Gastrocnemius medialis (tissue), 4 donors: ENCODE measurements at regions of chr12 and their contacts with region 1.

Region 1: GRCh38 chr12:3533703-3534386 is 42.8 kb downstream of the PRMT8 start:
- DNase-seq: peak; percentile 45 to 54
- ATAC-seq: peak; percentile 71 to 74
- H3K4me3 ChIP-seq: no peak overlapping the region
- H3K27ac ChIP-seq: peak overlapping the region; percentile 23 to 52 (median 41)
- H3K4me1 ChIP-seq: peaks cover 43 to 46% of the 10 kb centered on the region in 2 donors
- H3K27me3 ChIP-seq: no peaks in the 10 kb centered on the region
- CTCF ChIP-seq: peak in 2 of 5 experiments; percentile 24 to 29
- POLR2A ChIP-seq: no peak

Region 2: GRCh38 chr12:3299929-3300832 is 233.7 kb before region 1 on chr12:
- in situ Hi-C with region 1: no loop called
- intact Hi-C with region 1: loop called (anchors 1 kb)
- DNase-seq: peak; percentile 90 to 92
- ATAC-seq: peak; percentile 93 to 96
- H3K4me3 ChIP-seq: peak overlapping the region in 3 of 4 donors; percentile 15 to 43 (median 28)
- H3K27ac ChIP-seq: peak overlapping the region; percentile 64 to 76 (median 74)
- H3K4me1 ChIP-seq: peaks cover 14% of the 10 kb centered on the region in 2 donors
- H3K27me3 ChIP-seq: no peaks in the 10 kb centered on the region
- CTCF ChIP-seq: peak; percentile 82 to 91 (median 84)
- POLR2A ChIP-seq: no peak

Region 3: DNA sequence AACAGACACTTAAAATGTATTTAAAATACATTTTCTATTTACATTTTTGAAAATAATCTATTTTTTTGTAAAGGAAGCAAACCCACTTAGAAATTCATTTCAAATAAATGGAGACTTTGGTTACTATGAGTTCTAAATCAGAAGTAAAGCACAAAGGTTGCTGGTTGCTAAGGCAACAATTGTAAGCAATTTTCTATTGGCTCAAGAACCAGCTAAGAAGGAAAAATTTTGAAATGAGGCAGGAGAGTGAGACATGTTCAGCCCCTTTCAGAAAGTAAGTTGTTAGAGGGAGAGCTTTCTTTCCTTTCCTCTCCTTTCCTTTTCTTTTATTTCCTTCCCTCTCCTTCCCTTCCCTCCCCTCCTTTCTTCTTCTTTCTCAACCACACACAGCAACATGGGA is 37.9 kb after region 1 on chr12:
- in situ Hi-C with region 1: no loop called
- intact Hi-C with region 1: no loop called
- DNase-seq: no peak
- ATAC-seq: no peak
- H3K4me3 ChIP-seq: no peak overlapping the region
- H3K27ac ChIP-seq: no peak overlapping the region
- H3K4me1 ChIP-seq: no peaks in the 10 kb centered on the region
- H3K27me3 ChIP-seq: no peaks in the 10 kb centered on the region
- CTCF ChIP-seq: no peak
- POLR2A ChIP-seq: no peak

Region 4: DNA sequence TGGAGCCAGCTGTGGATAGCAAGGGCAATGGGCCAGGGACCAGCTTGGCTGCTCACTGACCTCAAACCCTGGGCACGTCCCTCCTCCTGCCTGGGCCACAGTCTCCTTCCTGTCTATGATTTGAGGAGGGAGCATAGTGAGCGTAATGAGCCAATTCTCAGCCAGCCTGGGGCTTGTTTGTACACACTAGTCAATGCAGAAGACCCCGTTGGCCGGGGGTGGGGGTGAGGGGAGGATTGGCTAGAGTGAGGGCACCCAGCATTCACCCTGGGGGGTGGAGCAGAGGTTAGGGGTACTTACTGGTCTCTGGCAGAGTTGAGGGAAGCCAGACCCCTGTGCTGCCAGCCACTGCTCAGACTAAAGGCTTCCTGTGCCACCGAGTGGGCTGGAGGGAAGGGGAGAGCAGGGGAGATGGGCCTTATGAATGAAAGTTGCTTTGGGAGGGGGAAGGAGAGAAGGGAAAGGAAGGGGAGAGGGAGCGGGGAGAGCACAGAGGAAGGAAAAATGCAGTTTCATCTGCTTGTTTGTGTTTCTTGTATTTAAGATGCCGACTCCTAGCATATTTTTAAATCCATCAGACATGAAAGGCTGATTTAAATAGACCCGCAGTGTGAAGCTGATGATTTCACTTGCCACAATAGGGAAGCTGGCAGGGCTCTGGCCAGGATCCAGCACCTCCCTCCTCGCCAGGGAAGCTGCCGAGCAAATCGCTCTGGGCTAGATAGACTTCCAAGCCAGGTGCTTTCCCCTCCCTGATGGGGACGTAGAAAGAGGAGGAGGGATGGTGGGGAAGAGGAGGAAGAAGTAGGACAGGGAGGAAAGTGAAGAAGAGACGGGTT is 71.1 kb after region 1 on chr12:
- in situ Hi-C with region 1: no loop called
- intact Hi-C with region 1: loop called (anchors 5 kb)
- DNase-seq: peak in 1 of 2 donors; percentile 22
- ATAC-seq: no peak
- H3K4me3 ChIP-seq: no peak overlapping the region
- H3K27ac ChIP-seq: no peak overlapping the region
- H3K4me1 ChIP-seq: peaks cover 23% of the 10 kb centered on the region in 2 donors
- H3K27me3 ChIP-seq: no peaks in the 10 kb centered on the region
- CTCF ChIP-seq: no peak
- POLR2A ChIP-seq: no peak

Region 5: DNA sequence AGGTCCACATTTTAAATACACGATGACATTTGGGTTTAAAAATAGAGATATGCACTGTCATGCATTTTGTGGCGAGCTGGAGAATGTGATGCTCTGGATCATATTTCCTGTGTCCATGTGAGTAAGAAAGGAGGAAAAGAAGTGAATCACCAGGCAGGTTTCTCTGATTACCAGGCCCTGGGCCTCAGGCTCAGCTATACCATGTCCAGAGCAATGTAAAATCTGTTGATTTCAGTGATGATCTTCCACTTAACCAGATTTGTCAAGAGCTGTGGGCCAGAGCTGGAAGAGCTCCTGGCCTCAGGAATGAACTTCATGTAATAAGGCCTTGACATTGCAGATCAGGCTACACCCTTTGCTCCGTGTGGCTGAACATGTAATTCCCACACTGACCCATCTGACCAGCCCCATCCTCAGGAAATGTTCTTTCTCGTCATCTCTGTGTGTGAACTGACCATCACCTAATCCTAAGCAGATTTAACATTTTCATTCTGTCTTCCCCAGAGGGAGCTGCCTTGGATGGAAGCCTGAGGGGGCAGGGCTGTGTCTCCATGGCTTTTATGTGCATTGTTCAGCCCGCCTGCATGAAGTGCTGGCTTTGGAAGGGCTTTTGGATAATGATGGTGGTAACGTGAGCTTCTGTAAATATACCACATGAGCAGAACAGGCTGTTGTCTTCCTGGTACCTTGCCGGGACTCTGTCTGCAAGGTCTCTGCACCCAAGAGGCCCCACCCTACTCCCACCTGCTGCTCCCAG is 164.6 kb after region 1 on chr12:
- in situ Hi-C with region 1: no loop called
- intact Hi-C with region 1: loop called (anchors 5 kb)
- DNase-seq: peak; percentile 60 to 72
- ATAC-seq: peak; percentile 92 to 95
- H3K4me3 ChIP-seq: no peak overlapping the region
- H3K27ac ChIP-seq: peak overlapping the region; percentile 78 to 92 (median 88)
- H3K4me1 ChIP-seq: peaks cover 21 to 27% of the 10 kb centered on the region in 2 donors
- H3K27me3 ChIP-seq: no peaks in the 10 kb centered on the region
- CTCF ChIP-seq: no peak
- POLR2A ChIP-seq: no peak

Region 6: DNA sequence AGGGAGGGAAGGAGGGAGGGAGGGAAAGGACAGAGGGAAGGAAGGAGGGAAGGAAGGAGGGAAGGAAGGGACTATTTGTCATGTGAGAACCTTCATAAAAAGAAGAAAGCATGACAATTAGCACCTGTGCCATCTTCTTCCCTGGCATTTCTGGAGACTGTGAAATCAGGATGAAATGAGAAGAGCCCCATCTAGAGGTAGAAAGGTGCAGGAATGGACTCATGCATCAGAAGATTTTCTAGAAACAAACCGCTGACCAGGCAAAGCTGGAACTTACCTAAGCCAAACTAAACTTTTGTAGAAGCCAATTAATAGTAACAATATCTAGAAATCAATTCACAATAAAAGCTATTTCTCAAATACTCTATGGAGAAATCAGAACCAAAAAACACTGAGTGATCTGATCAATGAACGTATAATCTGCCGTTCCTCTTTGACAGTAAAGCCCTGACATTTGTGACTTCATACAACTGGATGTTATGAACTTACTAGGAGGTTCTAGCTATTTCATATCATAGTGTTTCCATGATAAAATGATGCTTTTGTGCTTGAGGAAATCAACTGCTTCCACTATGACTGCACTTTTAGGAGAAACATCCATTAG is 243.5 kb after region 1 on chr12:
- in situ Hi-C with region 1: no loop called
- intact Hi-C with region 1: loop called (anchors 10 kb)
- DNase-seq: no peak
- ATAC-seq: peak; percentile 83 to 85
- H3K4me3 ChIP-seq: no peak overlapping the region
- H3K27ac ChIP-seq: no peak overlapping the region
- H3K4me1 ChIP-seq: peaks cover 0 to 4% of the 10 kb centered on the region in 2 donors
- H3K27me3 ChIP-seq: no peaks in the 10 kb centered on the region
- CTCF ChIP-seq: peak; percentile 44 to 71 (median 56)
- POLR2A ChIP-seq: no peak

Region 7: DNA sequence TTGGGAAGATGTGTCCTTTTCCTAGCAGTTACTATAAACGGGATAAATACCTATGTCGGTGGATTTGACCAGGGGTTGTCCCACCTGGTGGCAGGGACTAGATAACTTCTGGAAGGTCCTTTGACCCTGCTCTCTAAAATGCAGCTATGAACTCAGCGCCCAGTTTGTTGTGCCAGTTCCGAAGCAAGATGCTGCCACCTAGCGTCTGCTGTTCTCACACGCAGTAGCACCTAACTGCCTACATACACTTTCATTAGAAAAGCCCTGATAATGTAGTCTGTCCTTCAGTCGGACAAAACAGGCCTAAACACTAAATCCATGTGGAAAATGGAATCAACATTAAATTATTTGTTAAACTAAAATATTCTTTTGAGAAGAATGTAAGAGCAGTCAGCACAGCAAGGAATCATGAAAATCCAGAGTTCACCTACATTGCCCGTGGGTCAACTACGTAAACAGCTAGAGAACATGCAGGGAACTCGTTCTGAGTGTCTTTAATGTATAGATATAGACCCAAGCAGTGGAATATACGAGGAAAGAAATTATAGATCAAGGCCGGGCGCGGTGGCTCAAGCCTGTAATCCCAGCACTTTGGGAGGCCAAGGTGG is 270.1 kb after region 1 on chr12:
- in situ Hi-C with region 1: no loop called
- intact Hi-C with region 1: loop called (anchors 10 kb)
- DNase-seq: peak; percentile 26 to 59
- ATAC-seq: peak; percentile 73 to 86
- H3K4me3 ChIP-seq: no peak overlapping the region
- H3K27ac ChIP-seq: no peak overlapping the region
- H3K4me1 ChIP-seq: no peaks in the 10 kb centered on the region
- H3K27me3 ChIP-seq: no peaks in the 10 kb centered on the region
- CTCF ChIP-seq: peak; percentile 60 to 83 (median 71)
- POLR2A ChIP-seq: no peak